Panc1 (cell line): ENCODE measurements at regions of chr18 and their contacts with region 1.

Region 1: DNA sequence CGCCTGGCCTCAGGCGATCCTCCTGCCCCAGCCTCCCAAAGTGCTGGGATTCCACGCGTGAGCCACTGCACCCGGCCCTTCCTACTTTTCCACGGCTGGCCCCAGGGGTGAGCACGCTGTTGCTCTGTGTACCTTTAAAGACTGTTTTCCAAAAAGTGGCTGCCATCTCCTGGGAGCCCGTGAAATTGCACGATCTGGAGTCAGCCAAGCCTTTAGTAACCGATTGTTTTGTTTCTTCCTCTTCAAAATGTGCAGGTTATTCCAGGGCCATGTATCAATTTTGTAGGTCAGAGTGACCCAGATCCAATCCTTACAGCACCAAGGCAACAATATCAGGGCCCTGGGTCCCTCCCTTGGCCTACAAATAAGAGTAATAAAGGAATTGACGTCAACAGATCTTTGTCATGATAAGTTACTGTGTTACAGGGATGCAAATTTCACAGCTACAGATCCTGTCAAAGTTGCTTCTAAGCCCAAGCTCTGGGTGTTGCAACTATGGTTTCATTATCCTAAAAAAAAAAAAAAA is 135.6 kb upstream of the ZNF236 start:
- DNase-seq: peak; percentile 22
- ATAC-seq: peak; percentile 89
- H3K4me3 ChIP-seq: 0 out of 4 replicates have a peak overlapping the region, but pooled peaks of 1 of the 2 experiments have one; percentile 9
- H3K27ac ChIP-seq: no peak overlapping the region
- H3K4me1 ChIP-seq: peaks cover 11% of the 10 kb centered on the region
- H3K27me3 ChIP-seq: peaks cover 27% of the 10 kb centered on the region
- CTCF ChIP-seq: no peak

Region 2: GRCh38 chr18:76492669-76493212 is 194.1 kb before region 1 on chr18:
- CTCF ChIA-PET with region 1: no interaction called
- POLR2A ChIA-PET with region 1: no interaction called
- in situ Hi-C with region 1: no loop called
- intact Hi-C with region 1: loop called (anchors 10 kb)
- DNase-seq: peak; percentile 97
- ATAC-seq: peak; percentile 86
- H3K4me3 ChIP-seq: peak overlapping the region; percentile 62 to 97
- H3K27ac ChIP-seq: peak overlapping the region; percentile 83
- H3K4me1 ChIP-seq: peaks cover 39% of the 10 kb centered on the region
- H3K27me3 ChIP-seq: peaks cover 7% of the 10 kb centered on the region
- CTCF ChIP-seq: no peak

Region 3: GRCh38 chr18:76525911-76526310 is 160.9 kb before region 1 on chr18:
- CTCF ChIA-PET with region 1: interaction called, 11 read pairs
- POLR2A ChIA-PET with region 1: no interaction called
- in situ Hi-C with region 1: no loop called
- intact Hi-C with region 1: no loop called
- DNase-seq: no peak
- ATAC-seq: no peak
- H3K4me3 ChIP-seq: no peak overlapping the region
- H3K27ac ChIP-seq: no peak overlapping the region
- H3K4me1 ChIP-seq: no peaks in the 10 kb centered on the region; the same call in none of the 2 replicates
- H3K27me3 ChIP-seq: peaks cover 46% of the 10 kb centered on the region
- CTCF ChIP-seq: no peak

Region 4: GRCh38 chr18:76741365-76741764 is 54.6 kb after region 1 on chr18:
- CTCF ChIA-PET with region 1: no interaction called
- POLR2A ChIA-PET with region 1: no interaction called
- in situ Hi-C with region 1: no loop called
- intact Hi-C with region 1: no loop called
- DNase-seq: no peak
- ATAC-seq: no peak
- H3K4me3 ChIP-seq: no peak overlapping the region
- H3K27ac ChIP-seq: no peak overlapping the region; the same call in 1 of the 2 replicates
- H3K4me1 ChIP-seq: peaks cover 13% of the 10 kb centered on the region
- H3K27me3 ChIP-seq: no peaks in the 10 kb centered on the region
- CTCF ChIP-seq: no peak